A673 (cell line): ENCODE measurements at regions of chr17 and their contacts with region 1.

Region 1: DNA sequence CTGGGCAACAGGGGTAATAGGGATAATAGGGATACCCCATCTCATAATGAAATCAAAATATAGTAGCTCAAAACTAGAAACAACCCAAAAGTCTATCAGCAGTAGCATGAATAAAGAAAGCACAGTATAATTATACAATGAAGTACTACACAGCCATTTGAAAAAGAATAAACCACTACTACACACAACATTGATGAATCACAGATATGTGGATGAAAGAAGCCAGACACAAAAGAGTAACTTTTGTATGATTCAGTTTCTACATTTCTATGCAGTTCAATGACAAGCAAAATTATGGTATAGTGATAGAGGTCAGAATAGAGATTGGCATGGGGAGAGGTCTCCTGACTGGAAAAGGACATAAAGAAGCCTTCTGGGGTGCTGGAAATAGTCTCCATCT is 2.8 kb upstream of the HOXB13 start:
- DNase-seq: no peak
- H3K4me3 ChIP-seq: no peak overlapping the region
- H3K27ac ChIP-seq: no peak overlapping the region
- H3K4me1 ChIP-seq: peaks cover 20% of the 10 kb centered on the region
- H3K27me3 ChIP-seq: no peaks in the 10 kb centered on the region
- CTCF ChIP-seq: no peak

Region 2: GRCh38 chr17:48704361-48705248 is 26.8 kb before region 1 on chr17:
- CTCF ChIA-PET with region 1: no interaction called
- POLR2A ChIA-PET with region 1: interaction called, 10 read pairs
- intact Hi-C with region 1: no loop called
- DNase-seq: no peak
- H3K4me3 ChIP-seq: no peak overlapping the region
- H3K27ac ChIP-seq: no peak overlapping the region
- H3K4me1 ChIP-seq: no peaks in the 10 kb centered on the region
- H3K27me3 ChIP-seq: no peaks in the 10 kb centered on the region
- CTCF ChIP-seq: no peak

Region 3: DNA sequence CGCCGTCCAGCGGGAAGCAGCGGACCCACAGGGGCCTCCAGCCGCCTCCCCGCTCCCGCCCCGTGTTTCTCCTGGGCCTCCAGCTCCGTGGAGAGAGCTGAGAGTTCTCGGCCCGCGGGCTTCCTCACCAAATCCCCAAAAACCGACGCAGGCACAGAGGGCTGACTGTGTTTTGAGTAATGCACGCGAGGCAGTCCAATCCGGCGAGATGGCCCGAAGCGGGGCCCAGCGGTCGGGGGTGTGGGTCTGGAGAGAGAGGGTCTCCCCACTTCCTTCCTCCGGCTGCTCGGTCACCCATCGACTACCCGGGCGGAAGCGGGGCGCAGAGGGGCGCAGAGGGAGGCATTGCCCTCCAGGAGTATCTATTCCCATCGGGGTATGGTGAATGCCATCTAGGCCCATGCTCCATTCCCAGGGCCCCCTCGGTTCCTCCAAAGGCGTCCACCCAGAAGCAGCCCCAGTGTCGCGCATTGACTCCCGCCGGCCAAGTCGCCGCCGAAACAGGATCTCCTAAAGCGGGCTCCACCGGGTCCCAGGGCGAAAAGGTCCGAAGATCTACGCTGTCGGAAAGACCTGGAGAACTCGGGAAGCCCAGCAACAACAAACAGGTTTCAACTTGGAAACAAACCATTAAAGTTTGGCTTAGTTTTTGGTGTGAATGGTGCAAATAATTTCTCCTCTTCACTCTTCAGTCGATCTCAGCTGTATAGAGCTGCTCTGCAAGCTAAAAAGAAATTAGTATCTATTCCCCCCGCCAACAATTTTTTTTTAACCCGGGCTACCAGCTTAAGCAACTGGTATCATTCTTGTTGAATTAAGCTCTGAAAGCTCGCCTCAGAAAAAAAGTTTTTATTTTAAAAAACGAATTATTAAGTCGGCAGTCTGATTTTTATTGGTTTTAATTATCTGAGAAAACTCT is 16.3 kb after region 1 on chr17:
- CTCF ChIA-PET with region 1: no interaction called
- POLR2A ChIA-PET with region 1: no interaction called
- intact Hi-C with region 1: no loop called
- DNase-seq: no peak
- H3K4me3 ChIP-seq: no peak overlapping the region
- H3K27ac ChIP-seq: no peak overlapping the region
- H3K4me1 ChIP-seq: no peaks in the 10 kb centered on the region
- H3K27me3 ChIP-seq: no peaks in the 10 kb centered on the region
- CTCF ChIP-seq: no peak